Activated CD4-positive, alpha-beta memory T cell treated with anti-CD3 and anti-CD28 coated beads for 36 hours (primary cell): ENCODE measurements at regions of chr17 and their contacts with region 1.

Region 1: DNA sequence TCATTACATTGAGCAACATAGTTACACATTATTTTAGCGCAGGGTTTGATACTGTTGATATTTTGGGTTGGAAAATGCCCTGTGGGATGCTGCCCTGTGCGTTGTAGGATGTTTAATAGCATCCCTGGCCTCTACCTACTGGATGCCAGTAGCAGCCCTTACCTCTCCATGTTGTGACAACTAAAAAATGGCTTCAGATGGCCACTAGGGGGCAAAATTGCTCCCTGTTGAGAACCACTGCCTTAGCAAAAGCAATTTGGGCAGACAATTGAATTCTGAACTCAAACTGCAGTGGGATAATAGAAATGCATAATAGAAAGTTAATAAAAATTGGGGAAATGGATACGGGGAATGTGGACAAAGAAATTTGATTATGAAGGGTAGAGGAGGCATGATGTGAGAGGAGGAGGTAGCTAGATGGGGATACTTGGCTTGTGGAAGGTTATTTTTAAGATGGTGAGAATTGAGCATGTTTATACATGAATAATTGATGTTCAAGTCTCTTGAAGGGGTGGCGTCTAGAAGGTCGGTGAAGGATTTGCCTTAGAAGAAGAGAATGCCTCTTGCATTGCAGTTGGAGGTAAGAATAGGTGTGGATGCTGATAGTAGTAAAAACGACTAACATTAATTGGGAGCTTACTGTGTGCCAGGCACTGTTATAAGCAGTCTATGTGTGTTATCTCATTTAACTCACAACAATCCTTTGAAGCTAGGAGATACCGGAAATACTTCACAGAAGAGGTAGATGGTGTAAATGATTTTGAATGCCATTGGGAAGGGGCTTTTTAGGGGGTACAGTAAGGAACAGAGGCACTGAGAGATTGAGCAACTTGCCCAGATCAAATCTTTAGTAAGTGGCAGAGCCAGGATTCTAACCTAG is 19.0 kb downstream of the HEATR9 start:
- DNase-seq: peak; percentile 62
- H3K4me3 Mint-ChIP-seq: no peak overlapping the region
- H3K27ac Mint-ChIP-seq: no peak overlapping the region
- H3K4me1 Mint-ChIP-seq: peaks cover 13% of the 10 kb centered on the region
- H3K27me3 Mint-ChIP-seq: no peaks in the 10 kb centered on the region

Region 2: GRCh38 chr17:35368081-35368830 is 481.5 kb before region 1 on chr17:
- CTCF ChIA-PET with region 1: no interaction called
- POLR2A ChIA-PET with region 1: no interaction called
- intact Hi-C with region 1: no loop called
- DNase-seq: peak; percentile 30
- H3K4me3 Mint-ChIP-seq: no peak overlapping the region
- H3K27ac Mint-ChIP-seq: no peak overlapping the region
- H3K4me1 Mint-ChIP-seq: peaks cover 54% of the 10 kb centered on the region
- H3K27me3 Mint-ChIP-seq: no peaks in the 10 kb centered on the region

Region 3: DNA sequence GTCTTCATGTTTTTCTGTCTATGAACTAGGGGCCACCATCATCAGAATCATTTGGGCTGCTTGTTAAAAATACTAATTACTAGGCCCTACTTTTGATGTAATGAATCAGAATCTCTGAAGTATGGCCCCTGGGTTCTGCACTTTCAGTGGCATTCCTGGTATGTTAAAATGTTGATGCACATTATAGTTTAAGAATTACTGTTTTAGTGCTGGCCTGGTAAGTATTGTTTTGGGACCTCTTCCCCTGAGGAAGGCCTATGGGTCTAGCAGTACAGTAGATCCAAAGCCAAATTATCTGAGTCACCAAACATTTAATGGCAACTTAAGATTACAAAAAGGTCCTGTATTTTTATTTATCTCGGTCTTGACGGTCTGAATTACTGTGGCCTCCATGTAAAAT is 203.8 kb before region 1 on chr17:
- CTCF ChIA-PET with region 1: no interaction called
- POLR2A ChIA-PET with region 1: no interaction called
- intact Hi-C with region 1: no loop called
- DNase-seq: no peak
- H3K4me3 Mint-ChIP-seq: no peak overlapping the region
- H3K27ac Mint-ChIP-seq: no peak overlapping the region
- H3K4me1 Mint-ChIP-seq: no peaks in the 10 kb centered on the region
- H3K27me3 Mint-ChIP-seq: no peaks in the 10 kb centered on the region

Region 4: GRCh38 chr17:35865412-35866340 is 16.0 kb after region 1 on chr17:
- CTCF ChIA-PET with region 1: interaction called, 12 read pairs
- POLR2A ChIA-PET with region 1: no interaction called
- intact Hi-C with region 1: no loop called
- DNase-seq: no peak
- H3K4me3 Mint-ChIP-seq: no peak overlapping the region
- H3K27ac Mint-ChIP-seq: no peak overlapping the region
- H3K4me1 Mint-ChIP-seq: peaks cover 12% of the 10 kb centered on the region
- H3K27me3 Mint-ChIP-seq: no peaks in the 10 kb centered on the region

Region 5: DNA sequence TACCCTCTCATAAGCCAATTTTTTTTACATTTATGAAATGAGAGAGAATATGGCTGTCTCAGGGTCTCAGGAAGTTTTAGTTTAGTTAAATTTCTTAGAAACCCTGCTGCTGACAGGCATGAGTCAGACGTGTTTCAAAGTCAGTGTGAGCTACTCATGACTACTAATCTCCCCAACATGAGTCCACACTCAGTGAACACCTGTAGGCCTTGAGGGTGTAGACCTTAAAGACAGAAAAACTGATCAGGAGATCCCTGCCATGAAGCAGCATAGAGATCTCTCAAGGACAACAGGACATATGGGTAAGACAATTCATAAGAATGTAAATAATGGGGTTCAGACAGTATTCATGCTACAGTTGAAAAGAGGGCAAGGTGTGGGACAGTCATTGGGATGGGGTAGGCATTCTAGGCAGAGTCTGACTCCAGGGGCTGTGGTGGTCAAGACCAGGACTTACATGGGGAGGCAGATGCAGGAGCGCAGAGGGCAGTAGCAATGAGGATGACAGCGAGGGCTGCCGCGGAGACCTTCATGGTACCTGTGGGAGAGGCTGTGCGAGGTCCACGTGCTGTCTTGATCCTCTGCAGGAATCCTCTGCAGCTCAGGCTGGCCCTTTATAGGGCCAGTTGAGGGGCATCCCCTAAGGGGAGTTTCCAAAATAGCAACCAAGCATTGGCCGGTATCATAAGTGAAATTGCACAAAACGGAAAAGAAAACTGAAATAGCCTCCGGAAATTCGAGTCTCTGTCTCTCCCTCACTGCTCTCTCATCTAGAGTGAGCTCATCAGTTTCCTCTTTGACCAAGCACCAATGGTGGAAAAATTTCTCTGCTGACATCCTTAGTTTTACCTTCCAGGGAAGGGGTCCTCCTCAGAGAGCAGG is 30.3 kb after region 1 on chr17 and contains the start of gene CCL5:
- CTCF ChIA-PET with region 1: interaction called, 11 read pairs
- POLR2A ChIA-PET with region 1: no interaction called
- intact Hi-C with region 1: no loop called
- DNase-seq: peak; percentile 75
- H3K4me3 Mint-ChIP-seq: peak within 1 kb of the TSS; percentile 69
- H3K27ac Mint-ChIP-seq: peak within 1 kb of the TSS; percentile 97
- H3K4me1 Mint-ChIP-seq: peaks cover 47% of the 10 kb centered on the region
- H3K27me3 Mint-ChIP-seq: no peaks in the 10 kb centered on the region
- total RNA-seq, gene CCL5: 120 to 133 TPM

Region 6: GRCh38 chr17:35915153-35915969 is 65.7 kb after region 1 on chr17:
- CTCF ChIA-PET with region 1: interaction called, 6 read pairs
- POLR2A ChIA-PET with region 1: no interaction called
- intact Hi-C with region 1: loop called (anchors 10 kb)
- DNase-seq: no peak
- H3K4me3 Mint-ChIP-seq: no peak overlapping the region
- H3K27ac Mint-ChIP-seq: no peak overlapping the region
- H3K4me1 Mint-ChIP-seq: peaks cover 5% of the 10 kb centered on the region
- H3K27me3 Mint-ChIP-seq: no peaks in the 10 kb centered on the region

Region 7: DNA sequence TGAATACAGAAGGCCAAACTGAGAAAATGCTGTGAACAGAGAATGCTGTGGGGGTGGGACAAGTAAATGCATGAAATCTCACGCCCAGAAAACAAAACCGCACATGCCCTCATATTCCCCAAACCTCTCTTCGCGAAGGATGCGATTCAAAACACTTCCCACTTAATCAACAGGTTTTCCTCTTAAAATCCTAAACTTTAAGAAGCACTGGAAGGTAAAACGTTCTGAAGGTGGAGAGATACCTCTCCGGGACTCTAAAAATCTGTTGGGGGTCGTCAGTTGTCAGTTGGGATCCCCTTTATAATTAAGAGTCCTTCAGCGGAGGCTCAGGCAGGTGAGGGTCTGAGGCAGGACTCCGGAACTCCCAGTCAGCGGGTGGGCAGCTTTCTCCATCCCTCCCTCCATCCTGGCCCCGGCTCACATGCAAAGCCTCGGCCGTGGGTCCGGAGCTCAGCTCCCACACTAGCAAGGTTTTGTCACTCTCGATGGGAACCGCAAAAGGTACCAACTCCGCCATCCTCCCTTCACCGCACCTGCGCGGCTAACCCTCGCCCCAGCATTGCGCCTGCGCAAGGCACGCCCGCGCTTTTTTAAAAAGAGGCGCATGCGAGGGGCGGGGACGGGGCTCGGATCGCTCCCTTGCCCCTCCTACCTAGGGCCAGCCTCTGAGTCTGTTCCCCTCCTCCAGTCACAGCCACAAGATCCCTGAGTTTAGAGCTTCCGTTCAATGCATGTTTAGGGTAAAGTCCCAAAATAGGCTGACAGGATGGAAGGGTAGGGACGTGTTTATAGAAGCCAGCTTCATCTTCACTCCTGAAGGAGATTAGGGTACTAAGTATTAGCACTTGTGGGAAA is 80.7 kb after region 1 on chr17 and contains the start of gene RDM1:
- CTCF ChIA-PET with region 1: interaction called, 21 read pairs
- POLR2A ChIA-PET with region 1: interaction called, 4 read pairs
- intact Hi-C with region 1: loop called (anchors 5 kb)
- DNase-seq: peak; percentile 94
- H3K4me3 Mint-ChIP-seq: peak within 1 kb of the TSS; percentile 79
- H3K27ac Mint-ChIP-seq: peak within 1 kb of the TSS; percentile 62
- H3K4me1 Mint-ChIP-seq: peaks cover 23% of the 10 kb centered on the region
- H3K27me3 Mint-ChIP-seq: peaks cover 2% of the 10 kb centered on the region
- total RNA-seq, gene RDM1: 10.4 to 10.6 TPM

Region 8: DNA sequence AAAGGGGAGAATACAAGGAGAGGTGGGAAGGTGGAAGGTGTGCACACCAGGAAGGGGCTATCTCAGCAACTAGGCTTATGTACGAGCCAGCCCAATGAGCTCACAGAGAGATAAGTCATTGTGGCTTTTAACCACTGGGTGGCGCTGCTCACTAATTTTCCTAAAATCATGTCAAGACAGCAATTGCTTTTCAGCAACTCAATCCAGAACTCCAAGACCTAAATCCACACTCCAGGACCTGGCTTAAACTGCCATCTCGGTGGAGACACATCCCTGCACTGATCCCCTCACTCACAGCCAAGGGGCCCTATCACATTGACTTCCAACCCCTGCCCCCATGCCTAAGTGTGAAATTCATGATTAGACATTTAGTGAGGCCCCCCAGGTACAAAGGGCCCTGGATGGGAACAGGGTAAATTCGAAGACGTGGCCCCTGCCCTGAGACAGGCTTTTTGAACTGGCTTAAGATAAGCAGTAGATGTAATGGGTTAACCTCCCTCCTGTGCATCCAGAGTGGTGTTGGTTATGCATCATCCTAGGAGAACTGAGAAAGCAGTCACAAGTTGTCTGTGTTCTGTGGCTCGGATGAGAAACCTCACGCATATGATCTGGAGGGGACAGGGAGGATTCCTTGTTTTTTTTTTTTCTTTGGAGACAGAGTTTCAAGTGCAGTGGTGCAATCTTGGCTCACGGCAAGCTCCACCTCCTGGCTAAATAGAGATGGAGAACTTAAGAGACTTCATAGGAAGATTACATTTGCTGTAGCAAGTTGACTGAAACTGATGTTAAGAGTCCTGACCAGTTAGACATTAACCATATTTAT is 120.1 kb after region 1 on chr17:
- CTCF ChIA-PET with region 1: interaction called, 11 read pairs
- POLR2A ChIA-PET with region 1: no interaction called
- intact Hi-C with region 1: no loop called
- DNase-seq: peak; percentile 81
- H3K4me3 Mint-ChIP-seq: no peak overlapping the region
- H3K27ac Mint-ChIP-seq: no peak overlapping the region
- H3K4me1 Mint-ChIP-seq: no peaks in the 10 kb centered on the region
- H3K27me3 Mint-ChIP-seq: peaks cover 1% of the 10 kb centered on the region